ENCODE measurements at regions of chr6 and their contacts with region 1.

Region 1: DNA sequence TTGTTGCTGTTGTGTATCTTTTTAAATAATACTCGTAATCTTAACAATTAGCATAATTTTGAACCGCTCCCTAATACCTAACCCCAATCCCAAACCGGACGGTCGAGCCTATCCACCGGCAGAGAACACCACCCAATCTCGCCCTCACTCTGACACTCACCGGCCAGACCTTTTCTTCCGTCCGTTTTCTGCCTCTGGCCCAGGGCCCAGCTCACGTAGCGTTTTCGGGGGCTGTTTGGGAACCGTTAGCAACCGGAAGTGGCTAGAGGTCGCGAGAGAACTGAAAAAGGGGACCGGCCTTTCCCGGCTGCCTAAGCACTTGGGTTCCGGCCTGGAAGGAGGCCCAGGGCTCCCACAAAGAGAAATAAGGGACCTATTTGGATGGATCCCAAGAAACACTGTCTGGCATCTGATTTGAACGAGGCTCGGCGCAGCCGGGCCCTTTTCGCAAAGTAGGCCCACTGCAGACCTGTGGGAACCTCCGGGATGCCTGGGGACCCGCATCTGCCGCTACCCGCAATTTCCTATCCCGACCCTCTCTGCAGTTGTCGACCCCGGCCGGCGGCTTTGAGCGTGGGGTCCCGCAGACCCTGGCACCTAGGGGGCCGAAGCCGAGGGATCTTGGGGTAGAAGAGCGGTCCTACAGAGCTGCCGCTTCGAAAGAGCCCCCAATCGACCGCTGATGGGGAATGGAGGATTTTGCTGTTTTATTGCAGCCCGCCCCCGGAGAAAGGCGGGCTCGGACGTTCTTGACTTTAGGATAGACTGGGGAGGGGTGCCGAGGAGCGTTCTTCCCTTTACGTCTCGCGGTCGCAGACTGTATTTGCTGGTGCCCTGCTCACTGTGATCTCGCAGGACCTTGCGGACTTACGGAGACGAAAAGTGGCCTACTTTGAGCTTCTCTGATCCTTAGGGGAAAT is 4.8 kb upstream of the ZKSCAN8 start:
- DNase-seq: peak; percentile 75 to 88
- ATAC-seq: peak; percentile 62 to 77 (median 75)
- H3K4me3 ChIP-seq: peak overlapping the region; percentile 88
- H3K4me3 Mint-ChIP-seq: peak overlapping the region; percentile 97
- H3K27ac ChIP-seq: peak overlapping the region; percentile 95
- H3K27ac Mint-ChIP-seq: peak overlapping the region; percentile 99 to 100
- H3K4me1 ChIP-seq: peaks cover 16% of the 10 kb centered on the region
- H3K4me1 Mint-ChIP-seq: peaks cover 64 to 75% of the 10 kb centered on the region in 2 donors
- H3K27me3 ChIP-seq: no peaks in the 10 kb centered on the region
- H3K27me3 Mint-ChIP-seq: no peaks in the 10 kb centered on the region
- CTCF ChIP-seq: no peak

Region 2: DNA sequence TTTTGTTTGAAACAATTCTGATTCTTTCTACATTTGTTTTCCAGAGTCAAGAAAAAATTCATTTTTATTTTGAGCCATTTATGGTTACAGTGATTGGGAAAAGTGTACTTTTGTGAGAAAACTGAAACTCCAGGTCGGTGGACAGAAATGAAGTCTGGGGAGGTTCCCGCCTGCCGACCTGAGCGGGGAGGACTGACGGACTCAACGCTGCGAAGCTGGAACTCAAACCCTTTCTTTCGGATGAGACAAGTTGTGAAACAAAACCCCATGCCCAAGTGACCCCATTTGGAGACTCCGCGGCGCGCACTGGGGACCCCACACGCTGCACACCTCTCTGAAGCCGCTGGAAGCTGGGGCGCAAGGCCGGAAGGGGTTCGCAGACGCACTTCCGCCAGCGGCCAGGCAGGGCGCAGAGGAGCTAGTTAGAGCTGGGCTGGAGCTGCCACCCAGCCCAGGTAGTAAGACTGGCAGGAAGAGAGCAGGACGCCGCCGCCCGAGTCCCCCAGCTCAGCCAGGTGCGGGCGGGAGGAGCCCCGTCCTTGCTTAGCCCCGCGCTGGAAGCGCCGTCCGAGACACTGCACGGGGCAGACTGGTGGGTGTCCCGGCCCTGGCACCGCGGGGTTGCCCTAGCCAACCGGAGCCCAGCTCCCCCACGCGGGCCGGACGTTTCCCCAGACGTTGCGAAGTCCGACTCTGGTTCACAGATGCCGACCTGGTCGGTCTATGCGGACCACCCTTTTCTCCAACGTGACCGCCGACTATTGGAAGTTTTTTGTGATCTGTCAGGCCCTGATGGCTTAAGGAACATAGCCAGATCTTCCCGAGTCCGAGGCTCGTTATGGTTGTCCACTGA is 32.2 kb before region 1 on chr6:
- intact Hi-C with region 1: loop called (anchors 5 kb)
- DNase-seq: peak; percentile 78 to 92
- ATAC-seq: peak; percentile 99
- H3K4me3 ChIP-seq: peak overlapping the region; percentile 57
- H3K4me3 Mint-ChIP-seq: peak overlapping the region; percentile 86
- H3K27ac ChIP-seq: peak overlapping the region; percentile 83
- H3K27ac Mint-ChIP-seq: peak overlapping the region; percentile 75 to 89
- H3K4me1 ChIP-seq: peaks cover 6% of the 10 kb centered on the region
- H3K4me1 Mint-ChIP-seq: peaks cover 11 to 12% of the 10 kb centered on the region in 2 donors
- H3K27me3 ChIP-seq: no peaks in the 10 kb centered on the region
- H3K27me3 Mint-ChIP-seq: peaks cover 22 to 30% of the 10 kb centered on the region in 2 donors
- CTCF ChIP-seq: peak; percentile 55

Region 3: DNA sequence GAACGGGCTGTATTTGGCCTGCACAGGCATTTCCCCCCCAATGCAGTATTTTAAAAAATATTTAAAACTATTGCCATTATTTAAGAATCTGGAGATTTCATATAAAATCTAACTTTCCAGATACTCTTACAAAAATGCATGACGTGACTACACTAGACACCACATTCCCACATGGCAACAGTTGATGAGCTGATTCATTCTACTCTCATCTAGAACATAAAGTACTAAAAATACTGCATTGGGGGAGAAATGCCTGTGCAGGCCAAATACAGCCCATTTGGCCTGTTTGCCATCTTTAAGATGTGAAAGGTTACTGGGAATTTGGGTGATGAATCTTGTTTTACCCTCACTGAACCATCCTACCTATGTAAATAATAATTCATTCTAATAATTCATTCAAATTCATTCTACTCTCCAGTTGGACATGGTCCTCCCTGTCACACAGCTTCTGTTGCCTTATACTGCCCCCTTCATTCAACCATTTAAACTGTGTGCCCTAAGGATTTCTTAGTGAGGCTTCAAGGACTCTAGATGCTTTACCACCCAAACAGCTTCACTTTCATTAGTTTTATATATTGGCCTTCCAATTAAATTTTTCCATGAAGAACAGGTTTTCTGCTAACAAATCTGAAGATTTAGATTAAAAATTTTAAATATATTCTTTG is 19.3 kb before region 1 on chr6:
- intact Hi-C with region 1: no loop called
- DNase-seq: no peak
- ATAC-seq: no peak
- H3K4me3 ChIP-seq: no peak overlapping the region
- H3K4me3 Mint-ChIP-seq: no peak overlapping the region
- H3K27ac ChIP-seq: no peak overlapping the region
- H3K27ac Mint-ChIP-seq: no peak overlapping the region
- H3K4me1 ChIP-seq: no peaks in the 10 kb centered on the region
- H3K4me1 Mint-ChIP-seq: no peaks in the 10 kb centered on the region
- H3K27me3 ChIP-seq: no peaks in the 10 kb centered on the region
- H3K27me3 Mint-ChIP-seq: no peaks in the 10 kb centered on the region
- CTCF ChIP-seq: no peak

Region 4: GRCh38 chr6:28252009-28252975 is 115.4 kb after region 1 on chr6 and contains the start of gene ZKSCAN4:
- intact Hi-C with region 1: loop called (anchors 5 kb)
- DNase-seq: peak; percentile 64 to 92
- ATAC-seq: peak; percentile 90 to 93 (median 91)
- H3K4me3 ChIP-seq: peak within 1 kb of the TSS; percentile 81
- H3K4me3 Mint-ChIP-seq: peak within 1 kb of the TSS; percentile 98
- H3K27ac ChIP-seq: peak within 1 kb of the TSS; percentile 59
- H3K27ac Mint-ChIP-seq: peak within 1 kb of the TSS; percentile 68 to 88
- H3K4me1 ChIP-seq: peaks cover 12% of the 10 kb centered on the region
- H3K4me1 Mint-ChIP-seq: peaks cover 31 to 38% of the 10 kb centered on the region in 2 donors
- H3K27me3 ChIP-seq: peaks cover 3% of the 10 kb centered on the region
- H3K27me3 Mint-ChIP-seq: peaks cover 3 to 8% of the 10 kb centered on the region in 2 donors
- CTCF ChIP-seq: no peak
- total RNA-seq, gene ZKSCAN4: 1.6 to 4.2 (median 2.9) TPM

Region 5: DNA sequence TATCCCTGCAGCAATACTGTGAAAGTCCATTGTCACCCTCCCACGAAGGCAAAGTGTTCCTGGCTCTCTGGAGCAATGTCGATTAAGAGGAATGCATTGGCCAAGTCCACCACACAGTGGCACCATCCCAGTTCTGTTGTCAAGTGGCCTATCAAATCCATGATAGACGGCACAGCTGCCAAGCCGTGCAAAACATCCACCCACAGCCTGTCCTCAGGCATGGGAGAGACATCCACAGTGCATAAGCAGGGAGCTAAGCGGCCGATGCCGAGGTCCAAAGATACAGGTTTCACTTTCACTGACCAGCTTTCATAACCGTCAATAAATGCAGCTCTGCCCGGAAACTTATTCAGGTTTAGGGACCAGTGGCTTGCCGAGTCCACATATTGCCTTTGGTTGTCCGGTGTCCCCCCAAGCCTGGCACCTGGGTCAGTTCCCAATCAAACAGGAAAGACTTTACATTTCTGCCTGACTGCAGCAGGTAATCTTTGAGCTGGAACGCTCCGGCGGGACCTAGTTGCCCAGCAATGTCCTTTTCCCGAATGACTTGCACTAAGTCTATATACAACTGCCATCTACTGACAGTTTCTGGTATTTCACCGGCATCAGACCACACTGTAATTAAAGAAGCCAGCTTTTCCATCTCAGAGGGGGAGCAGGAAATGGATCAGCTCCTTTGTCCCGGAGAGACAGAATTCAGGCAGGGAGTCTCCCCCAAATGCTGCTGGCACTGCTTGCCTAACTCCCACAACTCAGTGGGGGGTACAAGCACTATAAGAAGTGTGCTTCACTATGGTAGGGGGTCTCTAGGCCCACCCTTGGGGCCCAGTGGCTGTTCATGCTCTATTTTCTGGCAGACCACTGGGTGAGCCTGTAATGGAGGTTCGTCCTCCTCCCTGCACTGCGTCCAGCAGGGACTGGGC is 219.2 kb after region 1 on chr6:
- intact Hi-C with region 1: loop called (anchors 2 kb)
- DNase-seq: peak; percentile 55 to 86
- ATAC-seq: peak; percentile 91 to 96 (median 91)
- H3K4me3 ChIP-seq: peak overlapping the region; percentile 64
- H3K4me3 Mint-ChIP-seq: peak overlapping the region; percentile 96
- H3K27ac ChIP-seq: peak overlapping the region; percentile 43
- H3K27ac Mint-ChIP-seq: peak overlapping the region; percentile 81 to 93
- H3K4me1 ChIP-seq: peaks cover 18% of the 10 kb centered on the region
- H3K4me1 Mint-ChIP-seq: peaks cover 20 to 23% of the 10 kb centered on the region in 2 donors
- H3K27me3 ChIP-seq: no peaks in the 10 kb centered on the region
- H3K27me3 Mint-ChIP-seq: no peaks in the 10 kb centered on the region
- CTCF ChIP-seq: peak; percentile 91

Measured in natural killer cell (primary cell).